ENCODE measurements at regions of chr16 and their contacts with region 1.

Region 1: GRCh38 chr16:50627419-50627818 is 53.7 kb downstream of the SNX20 start:
- DNase-seq: peak; percentile 61 to 82 (median 74)
- ATAC-seq: peak; percentile 70 to 72
- H3K4me3 ChIP-seq: no peak overlapping the region
- H3K27ac ChIP-seq: no peak overlapping the region
- H3K4me1 ChIP-seq: peaks cover 2% of the 10 kb centered on the region
- H3K27me3 ChIP-seq: no peaks in the 10 kb centered on the region

Region 2: GRCh38 chr16:50371936-50372595 is 255.4 kb before region 1 on chr16:
- intact Hi-C with region 1: loop called in 1 of 4 experiments (anchors 10 kb)
- DNase-seq: peak; percentile 43 to 69 (median 65)
- ATAC-seq: peak; percentile 44 to 46
- H3K4me3 ChIP-seq: no peak overlapping the region
- H3K27ac ChIP-seq: no peak overlapping the region
- H3K4me1 ChIP-seq: peaks cover 3% of the 10 kb centered on the region
- H3K27me3 ChIP-seq: no peaks in the 10 kb centered on the region